Panc1 (cell line): ENCODE measurements at regions of chr2 and their contacts with region 1.

Region 1: GRCh38 chr2:202634556-202635427 is at the start of gene FAM117B:
- DNase-seq: peak; percentile 62
- ATAC-seq: peak; percentile 96
- H3K4me3 ChIP-seq: peak within 1 kb of the TSS; percentile 76 to 87
- H3K27ac ChIP-seq: peak within 1 kb of the TSS; percentile 81
- H3K4me1 ChIP-seq: peaks cover 26% of the 10 kb centered on the region
- H3K27me3 ChIP-seq: no peaks in the 10 kb centered on the region
- CTCF ChIP-seq: no peak
- total RNA-seq, gene FAM117B: 7.8 TPM

Region 2: DNA sequence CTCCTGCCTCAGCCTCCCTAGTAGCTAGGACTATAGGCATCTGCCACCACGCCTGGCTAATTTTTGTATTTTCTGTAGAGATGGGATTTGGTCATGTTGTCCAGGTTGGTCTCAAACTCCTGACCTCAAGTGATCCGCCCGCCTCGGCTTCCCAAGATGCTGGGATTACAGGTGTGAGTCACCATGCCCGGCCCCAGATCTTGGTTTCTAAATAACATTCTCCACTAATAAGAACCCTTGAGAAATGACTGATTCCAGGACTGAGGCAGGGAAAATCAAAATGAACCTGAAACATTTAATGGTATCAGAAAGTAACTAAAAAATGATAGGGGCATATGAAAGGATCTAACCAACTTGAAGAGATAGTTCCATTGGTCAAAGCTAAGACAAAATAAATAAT is 224.7 kb before region 1 on chr2:
- CTCF ChIA-PET with region 1: interaction called, 11 read pairs
- POLR2A ChIA-PET with region 1: no interaction called
- in situ Hi-C with region 1: no loop called
- intact Hi-C with region 1: no loop called
- DNase-seq: no peak
- ATAC-seq: no peak
- H3K4me3 ChIP-seq: no peak overlapping the region
- H3K27ac ChIP-seq: no peak overlapping the region
- H3K4me1 ChIP-seq: peaks cover 2% of the 10 kb centered on the region; the same call in 1 of the 2 replicates
- H3K27me3 ChIP-seq: no peaks in the 10 kb centered on the region
- CTCF ChIP-seq: no peak

Region 3: DNA sequence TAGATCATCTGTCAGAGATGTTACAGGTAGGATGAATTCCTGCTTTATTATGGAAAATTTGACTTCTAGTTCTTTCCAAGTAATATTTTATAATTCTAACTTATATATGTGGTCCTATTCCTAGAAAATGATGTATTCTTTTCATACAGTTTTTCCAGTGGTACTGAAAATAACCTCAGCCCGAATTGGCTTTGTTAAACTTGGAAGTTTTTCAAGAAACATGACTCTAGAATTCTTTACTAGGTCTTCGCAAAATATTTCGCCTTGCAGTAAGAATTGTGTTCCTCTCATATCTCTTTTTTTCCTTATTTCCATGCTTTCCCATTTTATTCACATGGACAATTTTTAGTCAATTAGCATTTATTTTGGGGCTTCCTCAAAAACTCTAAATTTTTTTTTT is 198.2 kb before region 1 on chr2:
- CTCF ChIA-PET with region 1: no interaction called
- POLR2A ChIA-PET with region 1: no interaction called
- in situ Hi-C with region 1: no loop called
- intact Hi-C with region 1: no loop called
- DNase-seq: no peak
- ATAC-seq: no peak
- H3K4me3 ChIP-seq: no peak overlapping the region
- H3K27ac ChIP-seq: no peak overlapping the region
- H3K4me1 ChIP-seq: no peaks in the 10 kb centered on the region; the same call in none of the 2 replicates
- H3K27me3 ChIP-seq: no peaks in the 10 kb centered on the region
- CTCF ChIP-seq: no peak

Region 4: DNA sequence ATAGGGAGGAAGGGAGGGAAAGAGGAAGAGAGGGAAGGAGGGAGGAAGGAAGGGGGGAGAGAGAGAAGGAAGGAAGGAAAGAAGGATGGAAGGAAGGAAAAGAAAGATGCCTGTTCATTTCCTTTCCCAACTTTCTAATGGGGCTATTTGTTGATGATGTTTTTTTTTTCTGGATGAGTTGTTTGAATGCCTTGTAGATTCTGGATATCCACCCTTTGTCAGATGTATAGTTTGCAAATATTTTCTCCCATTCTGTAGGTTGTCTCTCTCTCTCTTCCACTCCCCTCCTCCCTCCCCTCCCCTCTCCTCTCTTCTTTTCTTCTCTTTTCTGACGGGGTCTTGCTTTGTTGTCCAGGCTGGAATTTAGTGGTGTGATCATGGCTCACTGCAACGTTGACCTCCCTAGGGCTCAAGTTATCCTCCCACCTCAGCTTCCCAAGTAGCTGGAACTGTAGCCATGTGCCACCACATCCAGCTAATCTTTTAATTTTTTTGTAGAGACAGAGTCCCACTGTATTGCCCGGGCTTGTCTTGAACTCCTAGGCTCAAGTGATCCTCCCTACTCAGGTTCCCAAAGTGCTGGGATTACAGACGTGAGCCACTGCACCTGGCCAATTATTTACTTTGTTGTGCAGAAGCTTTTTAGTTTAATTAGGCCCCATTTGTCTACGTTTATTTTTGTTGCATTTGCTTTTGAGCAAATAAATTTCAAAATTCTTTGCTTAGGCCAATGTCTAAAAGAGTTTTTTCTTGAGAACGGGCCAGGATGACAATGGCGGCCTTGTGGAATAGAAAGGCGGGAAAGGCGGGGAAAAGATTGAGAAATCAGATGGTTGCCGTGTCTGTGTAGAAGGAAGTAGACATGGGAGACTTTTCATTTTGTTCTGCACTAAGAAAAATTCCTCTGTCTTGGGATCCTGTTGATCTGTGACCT is 57.3 kb before region 1 on chr2:
- CTCF ChIA-PET with region 1: no interaction called
- POLR2A ChIA-PET with region 1: no interaction called
- in situ Hi-C with region 1: no loop called
- intact Hi-C with region 1: no loop called
- DNase-seq: no peak
- ATAC-seq: no peak
- H3K4me3 ChIP-seq: no peak overlapping the region
- H3K27ac ChIP-seq: no peak overlapping the region
- H3K4me1 ChIP-seq: no peaks in the 10 kb centered on the region
- H3K27me3 ChIP-seq: no peaks in the 10 kb centered on the region
- CTCF ChIP-seq: no peak

Region 5: DNA sequence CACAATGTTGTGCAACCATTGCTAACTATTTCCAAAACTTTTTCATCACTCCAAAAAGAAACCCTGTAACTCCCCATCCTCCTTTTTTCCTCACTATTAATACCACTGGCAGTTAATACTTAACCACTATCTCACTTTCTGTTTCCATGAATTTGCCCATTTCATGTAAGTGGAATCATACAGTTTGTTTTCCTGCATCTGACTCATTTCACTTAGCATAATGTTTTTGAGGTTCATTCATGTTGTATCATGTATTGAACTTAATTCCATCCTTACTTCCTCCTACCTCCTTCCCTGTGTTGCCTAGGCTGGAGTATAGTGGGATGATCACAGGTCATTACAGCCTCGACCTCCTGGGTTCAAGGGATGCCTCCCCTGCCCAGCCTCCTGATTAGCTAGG is 68.3 kb after region 1 on chr2:
- CTCF ChIA-PET with region 1: no interaction called
- POLR2A ChIA-PET with region 1: no interaction called
- in situ Hi-C with region 1: no loop called
- intact Hi-C with region 1: no loop called
- DNase-seq: no peak
- ATAC-seq: no peak
- H3K4me3 ChIP-seq: no peak overlapping the region
- H3K27ac ChIP-seq: no peak overlapping the region
- H3K4me1 ChIP-seq: no peaks in the 10 kb centered on the region
- H3K27me3 ChIP-seq: no peaks in the 10 kb centered on the region
- CTCF ChIP-seq: no peak

Region 6: DNA sequence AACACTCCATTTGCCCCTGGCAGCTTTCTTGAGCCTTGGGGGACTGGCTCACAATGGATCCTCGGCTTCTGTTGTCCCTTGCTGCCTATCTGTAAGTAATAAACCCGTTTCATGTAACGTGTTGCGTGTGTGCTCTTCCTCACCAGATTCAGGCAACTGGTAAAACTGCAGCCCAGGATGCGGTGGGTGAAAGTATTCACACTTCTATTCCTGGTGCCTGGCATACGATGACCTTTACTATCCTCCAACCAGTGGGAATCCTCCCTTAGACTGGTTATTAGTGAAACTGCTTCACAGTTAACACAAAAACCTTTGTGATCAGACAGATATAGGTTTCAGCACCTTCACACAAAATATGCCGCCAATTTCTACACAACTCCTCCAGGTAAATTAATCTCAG is 250.4 kb after region 1 on chr2:
- CTCF ChIA-PET with region 1: interaction called, 11 read pairs
- POLR2A ChIA-PET with region 1: no interaction called
- in situ Hi-C with region 1: no loop called
- intact Hi-C with region 1: no loop called
- DNase-seq: no peak
- ATAC-seq: no peak
- H3K4me3 ChIP-seq: no peak overlapping the region
- H3K27ac ChIP-seq: no peak overlapping the region
- H3K4me1 ChIP-seq: no peaks in the 10 kb centered on the region
- H3K27me3 ChIP-seq: no peaks in the 10 kb centered on the region
- CTCF ChIP-seq: no peak